ENCODE measurements at regions of chr9 and their contacts with region 1.

Region 1: DNA sequence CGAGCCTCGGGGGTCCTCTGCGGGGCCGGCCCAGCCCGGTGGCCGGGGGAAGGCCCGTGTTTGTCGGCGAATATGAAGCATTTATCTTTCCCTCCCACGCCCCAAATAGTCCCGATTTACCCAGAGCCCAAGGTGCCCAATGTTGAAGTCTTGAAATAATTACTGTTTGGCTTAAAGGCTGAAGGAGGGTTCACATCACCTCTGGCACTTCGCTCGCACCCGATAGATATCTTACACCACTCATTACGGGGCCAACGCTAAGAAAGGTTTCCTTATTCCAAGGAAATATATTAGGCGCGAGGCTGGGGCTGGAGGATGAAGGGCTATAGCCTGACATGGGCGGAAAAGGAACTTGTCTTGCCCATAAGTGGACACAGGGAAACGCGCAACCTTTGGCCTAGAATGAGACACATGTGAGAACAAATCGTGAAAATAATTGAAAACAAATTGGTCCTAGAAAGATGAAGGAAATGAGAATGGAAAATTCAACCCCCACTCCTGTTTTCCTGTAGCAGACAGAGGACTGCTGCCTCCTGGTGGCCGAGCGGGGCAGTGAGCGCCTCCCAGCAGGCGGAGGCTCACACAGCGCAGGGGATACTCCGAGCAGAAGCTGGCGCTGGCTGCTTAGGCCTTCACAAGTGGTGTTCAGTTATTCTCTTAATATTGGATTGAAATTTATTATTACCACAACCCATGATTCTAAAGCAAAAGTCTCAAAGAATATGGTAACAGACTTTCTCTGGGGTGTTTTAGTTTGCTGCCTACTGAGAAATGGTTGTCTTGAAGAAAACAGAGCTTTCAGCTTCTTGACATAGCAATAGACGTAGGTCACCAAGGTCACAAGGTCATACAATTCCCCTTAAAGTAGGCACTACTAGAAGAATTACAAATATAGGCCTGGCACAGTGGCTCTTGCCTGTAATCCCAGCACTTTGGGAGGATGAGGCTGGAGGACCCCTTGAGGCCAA is 7.9 kb downstream of the CCL21 start:
- DNase-seq: peak; percentile 67
- ATAC-seq: peak; percentile 90
- H3K4me3 ChIP-seq: peak overlapping the region; percentile 65
- H3K27ac ChIP-seq: no peak overlapping the region
- H3K4me1 ChIP-seq: no peaks in the 10 kb centered on the region
- H3K27me3 ChIP-seq: no peaks in the 10 kb centered on the region; the same call in 1 of the 2 replicates
- CTCF ChIP-seq: peak; percentile 93

Region 2: GRCh38 chr9:34675048-34675714 is 26.9 kb before region 1 on chr9:
- CTCF ChIA-PET with region 1: no interaction called
- POLR2A ChIA-PET with region 1: no interaction called
- intact Hi-C with region 1: loop called (anchors 1 kb)
- DNase-seq: peak; percentile 72
- ATAC-seq: peak; percentile 85
- H3K4me3 ChIP-seq: no peak overlapping the region
- H3K27ac ChIP-seq: no peak overlapping the region
- H3K4me1 ChIP-seq: no peaks in the 10 kb centered on the region
- H3K27me3 ChIP-seq: no peaks in the 10 kb centered on the region
- CTCF ChIP-seq: peak; percentile 85

Region 3: GRCh38 chr9:34744295-34745221 is 42.5 kb after region 1 on chr9:
- CTCF ChIA-PET with region 1: no interaction called
- POLR2A ChIA-PET with region 1: no interaction called
- intact Hi-C with region 1: loop called (anchors 5 kb)
- DNase-seq: peak; percentile 90
- ATAC-seq: peak; percentile 92
- H3K4me3 ChIP-seq: no peak overlapping the region; the same call in 1 of the 2 replicates
- H3K27ac ChIP-seq: peak overlapping the region; percentile 64
- H3K4me1 ChIP-seq: peaks cover 35% of the 10 kb centered on the region
- H3K27me3 ChIP-seq: no peaks in the 10 kb centered on the region
- CTCF ChIP-seq: no peak